H1 (cell line): ENCODE measurements at regions of chr4 and their contacts with region 1.

Region 1: GRCh38 chr4:138680989-138681604 is 334.5 kb upstream of the NOCT start:
- DNase-seq: peak in 1 of 2 experiments; percentile 91
- H3K4me3 ChIP-seq: no peak overlapping the region
- H3K27ac ChIP-seq: no peak overlapping the region
- H3K4me1 ChIP-seq: peaks cover 5 to 21% (median 9%) of the 10 kb centered on the region in 4 experiments
- H3K27me3 ChIP-seq: no peaks in the 10 kb centered on the region; a peak in 1 of 7 replicates
- CTCF ChIP-seq: peak; percentile 51 to 87 (median 80)
- EP300 ChIP-seq: no peak
- POLR2A ChIP-seq: no peak
- RAD21 ChIP-seq: peak; percentile 97 to 98

Region 2: DNA sequence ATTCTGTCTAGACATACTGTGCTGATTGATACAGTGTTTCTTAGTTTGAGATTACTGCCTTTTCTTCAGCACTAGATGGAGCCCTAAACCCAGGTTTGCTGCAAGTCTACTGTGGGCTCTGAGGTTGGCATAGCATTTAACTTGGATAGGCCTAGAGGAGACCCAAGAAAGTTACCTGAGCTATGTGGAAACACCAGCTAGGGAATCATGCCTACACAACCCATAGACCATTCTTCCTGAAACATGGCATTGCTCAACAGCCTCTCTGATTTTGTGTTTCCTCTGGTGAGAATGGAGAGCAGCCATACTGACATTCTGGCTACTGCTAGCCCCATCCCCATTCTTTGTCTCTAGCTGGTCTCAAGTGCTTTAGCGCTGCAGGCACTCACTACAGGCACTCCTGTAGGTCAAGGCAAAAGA is 861.1 kb before region 1 on chr4:
- CTCF ChIA-PET with region 1: interaction called, 17 read pairs
- POLR2A ChIA-PET with region 1: no interaction called
- DNase-seq: peak; percentile 43 to 47
- H3K4me3 ChIP-seq: no peak overlapping the region
- H3K27ac ChIP-seq: no peak overlapping the region
- H3K4me1 ChIP-seq: no peaks in the 10 kb centered on the region
- H3K27me3 ChIP-seq: no peaks in the 10 kb centered on the region
- CTCF ChIP-seq: peak in 2 of 3 experiments; percentile 77 to 84; a peak in 3 of 4 replicates
- EP300 ChIP-seq: no peak
- POLR2A ChIP-seq: no peak
- RAD21 ChIP-seq: peak; percentile 97

Region 3: DNA sequence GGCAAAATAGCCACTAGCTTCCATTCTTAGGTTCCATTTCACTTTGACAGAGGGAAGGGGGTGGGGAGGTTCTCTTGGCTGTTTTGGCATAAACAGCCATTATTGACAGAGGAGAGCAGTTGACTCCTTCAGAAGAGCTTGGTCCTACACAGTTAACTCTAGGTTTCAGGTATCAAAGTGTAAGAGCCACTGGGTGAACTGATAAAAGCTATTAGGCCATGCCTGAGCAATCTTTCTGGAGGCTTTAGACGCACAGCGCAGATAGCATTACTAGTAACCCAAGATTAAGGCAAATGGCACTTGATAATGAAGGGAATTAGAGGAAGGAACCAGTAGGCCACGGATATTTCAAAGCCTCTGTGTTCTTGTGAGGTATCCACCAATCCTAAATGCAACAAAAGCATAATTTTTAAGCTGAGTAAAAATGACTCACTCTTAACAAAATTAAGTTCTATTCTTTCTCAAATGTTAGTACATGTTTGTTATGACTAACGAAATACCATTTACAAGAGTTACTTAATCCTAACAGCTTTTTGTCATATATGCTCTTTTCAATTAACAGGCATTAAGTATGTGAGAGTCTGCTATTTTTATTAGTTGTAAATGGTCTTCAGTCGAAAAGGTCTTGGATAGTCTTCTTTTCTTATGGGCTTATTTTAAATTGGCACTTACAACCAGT is 492.6 kb before region 1 on chr4:
- CTCF ChIA-PET with region 1: interaction called, 17 read pairs
- POLR2A ChIA-PET with region 1: no interaction called
- DNase-seq: no peak
- H3K4me3 ChIP-seq: no peak overlapping the region
- H3K27ac ChIP-seq: no peak overlapping the region
- H3K4me1 ChIP-seq: peaks cover 0 to 7% (median 5%) of the 10 kb centered on the region in 4 experiments; a peak in 2 of 7 replicates
- H3K27me3 ChIP-seq: no peaks in the 10 kb centered on the region
- CTCF ChIP-seq: no peak
- EP300 ChIP-seq: no peak
- POLR2A ChIP-seq: no peak
- RAD21 ChIP-seq: no peak

Region 4: GRCh38 chr4:138522366-138522765 is 158.7 kb before region 1 on chr4:
- CTCF ChIA-PET with region 1: interaction called, 37 read pairs
- POLR2A ChIA-PET with region 1: no interaction called
- DNase-seq: no peak
- H3K4me3 ChIP-seq: no peak overlapping the region
- H3K27ac ChIP-seq: no peak overlapping the region
- H3K4me1 ChIP-seq: no peaks in the 10 kb centered on the region
- H3K27me3 ChIP-seq: no peaks in the 10 kb centered on the region
- CTCF ChIP-seq: peak in 2 of 3 experiments; percentile 55 to 58; a peak in 3 of 4 replicates
- EP300 ChIP-seq: no peak
- POLR2A ChIP-seq: no peak
- RAD21 ChIP-seq: peak; percentile 80 to 86

Region 5: DNA sequence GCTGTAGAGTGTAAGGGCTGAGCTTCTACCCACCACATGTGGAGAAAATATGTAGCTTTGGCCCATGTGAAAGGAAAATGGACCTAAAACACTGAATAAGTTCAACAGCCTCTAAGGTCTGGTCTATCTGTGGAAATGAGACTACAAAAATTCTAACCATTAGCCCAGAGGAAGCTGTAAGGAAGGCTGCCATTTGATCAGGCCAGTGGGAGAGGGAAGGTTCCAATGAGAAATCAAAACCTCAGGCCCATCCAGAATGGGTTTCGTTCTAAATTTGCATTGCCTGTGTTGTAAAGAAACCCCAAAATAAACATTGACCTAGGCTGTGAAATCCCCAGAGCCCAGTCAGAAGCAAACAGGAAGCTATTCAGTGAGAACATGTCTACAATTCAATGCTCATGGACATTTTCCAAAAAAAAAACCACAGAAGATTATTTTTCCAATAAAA is 118.5 kb before region 1 on chr4:
- CTCF ChIA-PET with region 1: interaction called, 77 read pairs
- POLR2A ChIA-PET with region 1: no interaction called
- DNase-seq: no peak
- H3K4me3 ChIP-seq: no peak overlapping the region
- H3K27ac ChIP-seq: no peak overlapping the region
- H3K4me1 ChIP-seq: no peaks in the 10 kb centered on the region
- H3K27me3 ChIP-seq: no peaks in the 10 kb centered on the region
- CTCF ChIP-seq: no peak
- EP300 ChIP-seq: no peak
- POLR2A ChIP-seq: no peak
- RAD21 ChIP-seq: no peak

Region 6: DNA sequence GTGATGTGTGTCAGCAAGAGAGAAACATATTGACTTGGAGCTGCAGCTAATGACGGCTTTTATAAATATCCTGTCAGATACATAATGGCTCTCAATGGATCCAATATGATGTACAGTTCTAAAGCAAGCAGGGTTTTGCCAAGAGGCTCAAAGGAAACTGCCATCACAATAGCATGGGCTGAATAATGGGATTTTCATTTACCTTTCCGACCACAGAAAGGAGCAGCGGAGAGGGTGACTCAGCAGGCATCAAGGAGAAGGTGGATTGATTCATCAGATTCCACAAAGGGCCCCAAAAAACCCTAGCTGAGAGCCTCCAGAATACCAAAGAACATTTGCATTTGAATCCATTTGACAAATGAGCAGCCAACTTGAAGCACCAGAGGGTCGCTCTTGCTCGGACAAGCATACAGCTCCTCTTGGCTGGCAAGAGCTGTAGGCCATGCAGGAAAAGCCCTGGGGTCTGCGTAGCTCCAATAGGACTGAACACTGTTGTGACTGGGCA is 21.2 kb before region 1 on chr4:
- CTCF ChIA-PET with region 1: interaction called, 11 read pairs
- POLR2A ChIA-PET with region 1: interaction called, 5 read pairs
- DNase-seq: peak; percentile 53 to 75
- H3K4me3 ChIP-seq: peak overlapping the region in 2 of 4 experiments; percentile 7 to 51; a peak in 4 of 8 replicates
- H3K27ac ChIP-seq: no peak overlapping the region
- H3K4me1 ChIP-seq: peaks cover 6 to 19% (median 12%) of the 10 kb centered on the region in 4 experiments; a peak in 6 of 7 replicates
- H3K27me3 ChIP-seq: peaks cover 0 to 1% (median 0%) of the 10 kb centered on the region in 4 experiments; a peak in 1 of 7 replicates
- CTCF ChIP-seq: no peak
- EP300 ChIP-seq: peak in 1 of 2 experiments; percentile 67; a peak in 1 of 3 replicates
- POLR2A ChIP-seq: no peak
- RAD21 ChIP-seq: peak in 1 of 2 experiments; percentile 3; a peak in 1 of 4 replicates

Region 7: GRCh38 chr4:138692411-138693034 is 11.4 kb after region 1 on chr4:
- CTCF ChIA-PET with region 1: interaction called, 13 read pairs
- POLR2A ChIA-PET with region 1: no interaction called
- DNase-seq: no peak
- H3K4me3 ChIP-seq: no peak overlapping the region
- H3K27ac ChIP-seq: no peak overlapping the region
- H3K4me1 ChIP-seq: peaks cover 0 to 5% (median 0%) of the 10 kb centered on the region in 4 experiments; a peak in 3 of 7 replicates
- H3K27me3 ChIP-seq: no peaks in the 10 kb centered on the region
- CTCF ChIP-seq: no peak
- EP300 ChIP-seq: no peak
- POLR2A ChIP-seq: no peak
- RAD21 ChIP-seq: no peak

Region 8: DNA sequence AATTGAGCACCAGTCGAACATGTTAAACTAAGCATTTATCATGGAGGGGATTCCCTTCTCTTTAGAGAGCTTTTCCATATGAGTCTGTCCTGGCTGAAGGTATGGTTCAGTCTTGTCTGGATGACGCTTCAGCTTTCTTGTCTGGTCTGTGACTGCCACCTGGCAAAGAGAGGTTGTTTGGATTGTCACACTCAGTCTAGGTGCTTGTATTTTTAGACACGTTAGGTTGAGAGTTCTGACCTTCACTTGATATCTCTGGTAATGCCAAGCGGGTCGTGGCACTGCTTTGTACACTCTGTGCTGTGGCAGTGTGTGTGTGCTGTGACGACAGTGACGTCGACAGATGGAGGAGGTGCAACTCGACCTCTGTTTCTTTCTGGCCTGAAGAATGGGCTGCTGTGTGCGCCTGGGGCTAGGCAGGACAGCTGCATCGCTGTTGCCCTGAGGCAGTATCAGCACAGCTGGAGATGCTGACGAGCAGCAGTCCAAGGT is 347.1 kb after region 1 on chr4:
- CTCF ChIA-PET with region 1: no interaction called
- POLR2A ChIA-PET with region 1: no interaction called
- DNase-seq: no peak
- H3K4me3 ChIP-seq: no peak overlapping the region
- H3K27ac ChIP-seq: no peak overlapping the region
- H3K4me1 ChIP-seq: peaks cover 1 to 8% (median 5%) of the 10 kb centered on the region in 4 experiments; a peak in 5 of 7 replicates
- H3K27me3 ChIP-seq: no peaks in the 10 kb centered on the region
- CTCF ChIP-seq: no peak
- EP300 ChIP-seq: no peak
- POLR2A ChIP-seq: no peak
- RAD21 ChIP-seq: no peak